Body of pancreas (tissue), 4 donors: ENCODE measurements at regions of chr15 and their contacts with region 1.

Region 1: GRCh38 chr15:80780416-80781221 is 1.4 kb downstream of the CEMIP start:
- DNase-seq: peak; percentile 14 to 42 (median 26)
- ATAC-seq: no peak
- H3K4me3 ChIP-seq: no peak overlapping the region
- H3K27ac ChIP-seq: no peak overlapping the region
- H3K4me1 ChIP-seq: peaks cover 22% of the 10 kb centered on the region
- H3K27me3 ChIP-seq: peaks cover 0 to 13% of the 10 kb centered on the region in 2 donors
- CTCF ChIP-seq: no peak
- POLR2A ChIP-seq: no peak

Region 2: GRCh38 chr15:80560601-80561400 is 219.8 kb before region 1 on chr15:
- intact Hi-C with region 1: loop called (anchors 5 kb)
- DNase-seq: no peak
- ATAC-seq: no peak
- H3K4me3 ChIP-seq: no peak overlapping the region
- H3K27ac ChIP-seq: no peak overlapping the region
- H3K4me1 ChIP-seq: no peaks in the 10 kb centered on the region
- H3K27me3 ChIP-seq: no peaks in the 10 kb centered on the region
- CTCF ChIP-seq: no peak
- POLR2A ChIP-seq: no peak

Region 3: DNA sequence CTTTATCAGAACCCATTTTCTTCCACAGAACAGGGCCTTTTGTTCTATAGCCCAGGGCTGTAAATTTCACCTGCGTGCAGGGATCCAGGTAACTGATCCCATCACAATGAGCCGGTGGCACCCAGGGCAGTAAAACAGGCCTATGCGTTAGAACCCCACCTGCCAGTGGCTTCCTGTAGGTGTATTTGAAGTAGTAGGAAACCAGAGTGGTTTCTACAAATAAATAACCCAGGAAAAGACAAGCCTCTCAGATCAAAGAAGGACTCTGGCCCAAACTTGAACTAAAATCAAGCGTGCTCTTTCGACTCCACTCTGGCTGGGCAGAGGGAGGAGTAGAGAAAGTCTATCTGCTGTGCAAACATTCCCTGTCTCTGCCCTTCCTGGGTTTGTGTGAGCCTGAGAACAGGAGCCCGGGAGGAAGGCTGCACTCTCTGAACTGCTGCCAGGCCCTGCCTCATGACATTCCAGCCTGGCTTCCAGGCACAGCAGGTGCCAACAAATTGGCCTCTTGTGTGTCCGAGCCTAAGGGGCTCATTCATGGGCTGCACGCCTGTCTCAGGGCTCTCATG is 76.3 kb after region 1 on chr15:
- intact Hi-C with region 1: no loop called
- DNase-seq: peak; percentile 73 to 88 (median 79)
- ATAC-seq: peak; percentile 85
- H3K4me3 ChIP-seq: no peak overlapping the region
- H3K27ac ChIP-seq: peak overlapping the region in 2 of 4 donors; percentile 40 to 51
- H3K4me1 ChIP-seq: peaks cover 12% of the 10 kb centered on the region
- H3K27me3 ChIP-seq: no peaks in the 10 kb centered on the region
- CTCF ChIP-seq: no peak
- POLR2A ChIP-seq: no peak